Activated CD8-positive, alpha-beta memory T cell treated with anti-CD3 and anti-CD28 coated beads, Interleukin-2, amount 10 ng/mL, durations not matched to agents 7 days and 5 days (primary cell): ENCODE measurements at regions of chr1 and their contacts with region 1.

Region 1: GRCh38 chr1:32876341-32877210 is 5.9 kb upstream of the FNDC5 start:
- DNase-seq: peak; percentile 70
- ATAC-seq: peak; percentile 80
- H3K4me3 Mint-ChIP-seq: no peak overlapping the region
- H3K27ac Mint-ChIP-seq: no peak overlapping the region
- H3K4me1 Mint-ChIP-seq: peaks cover 2% of the 10 kb centered on the region
- H3K27me3 Mint-ChIP-seq: peaks cover 50% of the 10 kb centered on the region

Region 2: GRCh38 chr1:32892368-32893197 is 16.0 kb after region 1 on chr1:
- CTCF ChIA-PET with region 1: interaction called, 14 read pairs
- DNase-seq: peak; percentile 51
- ATAC-seq: peak; percentile 75
- H3K4me3 Mint-ChIP-seq: no peak overlapping the region
- H3K27ac Mint-ChIP-seq: no peak overlapping the region
- H3K4me1 Mint-ChIP-seq: no peaks in the 10 kb centered on the region
- H3K27me3 Mint-ChIP-seq: peaks cover 73% of the 10 kb centered on the region

Region 3: DNA sequence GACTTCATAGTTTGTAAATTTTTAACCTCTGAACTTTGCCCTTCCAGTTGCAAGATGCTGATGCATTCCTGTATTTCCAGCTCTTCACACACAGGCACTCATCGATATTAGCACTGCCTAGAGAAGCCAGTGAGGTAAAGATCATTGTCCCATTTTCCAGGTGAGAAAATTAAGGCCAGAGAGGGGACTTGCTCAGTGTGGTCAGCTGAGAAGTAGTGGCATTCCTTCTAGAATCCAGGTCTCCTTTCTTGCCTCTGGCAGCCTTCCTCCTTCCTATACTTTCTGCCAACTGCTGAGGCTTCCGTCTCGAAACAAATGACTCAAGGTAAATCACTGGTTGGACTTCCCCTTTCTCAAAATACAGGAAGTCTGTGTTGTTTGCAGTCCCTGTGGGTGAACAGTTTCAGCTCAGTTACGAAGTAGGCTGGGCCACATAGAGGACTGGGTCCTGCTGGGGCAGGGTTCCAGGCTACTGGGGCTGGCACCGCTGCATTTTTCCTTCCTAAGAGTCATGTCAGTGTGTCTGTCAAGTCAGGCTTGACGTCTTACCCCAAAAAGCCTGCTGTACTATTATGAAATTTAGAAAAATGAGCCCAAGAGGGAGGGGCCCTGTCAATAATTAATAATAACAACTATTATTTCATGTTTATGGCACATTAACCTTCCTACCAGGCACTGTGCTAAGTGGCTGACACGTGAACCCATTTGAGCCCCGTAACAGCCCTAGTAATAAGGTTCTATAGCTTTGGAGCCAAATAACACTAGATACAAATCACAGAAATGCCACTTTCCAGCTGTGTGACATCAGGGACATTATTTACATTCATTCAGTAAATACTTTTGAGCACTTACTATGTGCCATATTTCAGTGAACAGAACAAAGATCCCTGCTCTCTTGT is 104.7 kb after region 1 on chr1:
- CTCF ChIA-PET with region 1: no interaction called
- DNase-seq: peak; percentile 80
- ATAC-seq: peak; percentile 95
- H3K4me3 Mint-ChIP-seq: peak overlapping the region; percentile 60
- H3K27ac Mint-ChIP-seq: peak overlapping the region; percentile 87
- H3K4me1 Mint-ChIP-seq: peaks cover 65% of the 10 kb centered on the region
- H3K27me3 Mint-ChIP-seq: no peaks in the 10 kb centered on the region

Region 4: DNA sequence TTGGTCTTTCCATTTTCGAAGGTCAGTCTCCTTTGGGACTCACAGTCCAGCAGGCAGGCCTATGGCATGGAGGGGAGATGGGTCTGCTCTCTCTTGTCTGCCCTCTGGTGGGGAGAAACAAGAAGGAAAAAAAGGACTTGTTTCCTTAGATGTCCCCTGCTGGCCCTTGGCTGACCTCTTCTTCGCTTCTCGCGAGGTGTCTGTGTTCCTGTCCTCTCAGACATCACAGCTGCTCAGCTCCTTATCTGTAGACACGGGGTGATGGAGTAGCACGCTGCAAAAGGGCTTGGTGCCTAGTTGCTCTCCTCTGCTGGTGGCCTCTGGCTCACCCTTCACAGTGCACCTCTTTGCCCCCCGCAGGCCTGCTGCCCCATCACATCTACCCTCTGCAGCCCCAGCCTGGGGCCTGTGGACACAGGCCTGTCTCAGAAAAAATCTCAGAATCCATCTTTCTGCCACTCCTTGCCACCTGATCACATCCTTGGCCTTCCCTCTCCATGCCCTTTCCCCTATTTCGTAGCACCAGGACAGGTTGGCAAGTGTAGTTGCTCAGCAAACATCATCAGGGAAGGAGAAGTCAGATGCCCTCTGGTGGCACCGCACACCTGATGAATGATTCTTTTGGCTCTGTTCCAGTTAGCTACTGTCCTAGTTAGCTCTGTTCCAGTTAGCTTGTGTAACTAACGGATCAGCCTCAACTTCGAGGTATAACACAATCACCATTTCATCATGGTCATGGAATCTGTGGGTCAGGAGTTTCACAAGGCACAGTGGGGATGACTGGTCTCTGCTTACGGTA is 178.8 kb after region 1 on chr1:
- CTCF ChIA-PET with region 1: interaction called, 11 read pairs
- DNase-seq: peak; percentile 49
- ATAC-seq: peak; percentile 71
- H3K4me3 Mint-ChIP-seq: no peak overlapping the region
- H3K27ac Mint-ChIP-seq: no peak overlapping the region
- H3K4me1 Mint-ChIP-seq: peaks cover 5% of the 10 kb centered on the region
- H3K27me3 Mint-ChIP-seq: peaks cover 4% of the 10 kb centered on the region

Region 5: GRCh38 chr1:33086384-33086850 is 209.8 kb after region 1 on chr1:
- CTCF ChIA-PET with region 1: interaction called, 26 read pairs
- DNase-seq: peak; percentile 65
- ATAC-seq: no peak
- H3K4me3 Mint-ChIP-seq: no peak overlapping the region
- H3K27ac Mint-ChIP-seq: no peak overlapping the region
- H3K4me1 Mint-ChIP-seq: peaks cover 47% of the 10 kb centered on the region
- H3K27me3 Mint-ChIP-seq: peaks cover 9% of the 10 kb centered on the region

Region 6: DNA sequence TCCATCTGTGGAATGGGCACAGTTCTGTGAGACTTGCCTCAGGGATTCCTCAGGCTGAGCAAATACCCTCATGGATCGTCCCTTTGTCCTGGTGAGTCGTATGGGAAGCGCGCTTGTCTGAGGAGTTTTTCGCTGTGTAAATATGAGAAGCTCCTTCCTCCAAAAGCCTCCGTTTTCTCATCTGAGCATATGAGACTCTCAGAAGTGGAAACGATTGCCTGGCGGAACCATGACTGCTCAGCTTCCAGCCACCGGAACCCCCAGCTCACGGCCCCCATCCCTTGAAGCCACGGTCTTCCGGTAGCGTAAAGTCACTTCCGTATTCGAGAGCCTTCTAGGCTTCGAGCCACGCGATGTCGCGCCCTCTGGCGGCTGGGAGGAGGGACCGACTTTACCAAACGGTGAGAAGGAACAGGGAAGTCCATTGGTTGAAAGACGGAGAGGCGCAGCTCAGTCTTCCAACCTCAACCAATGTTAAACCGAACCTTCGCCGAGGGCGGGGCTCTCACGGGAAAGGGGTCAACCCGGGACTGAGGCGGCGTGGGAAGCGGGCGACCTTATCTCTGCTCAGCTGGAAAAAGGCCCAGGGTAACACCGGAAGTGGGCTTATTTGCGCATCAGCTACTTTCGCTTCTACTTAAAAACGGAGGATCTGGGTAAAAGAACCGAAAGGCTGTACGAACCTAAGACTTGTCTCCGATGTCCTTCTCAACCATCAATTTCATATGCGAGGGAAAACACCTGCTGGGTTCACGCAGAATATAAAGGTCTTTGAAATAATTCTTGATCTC is 250.6 kb after region 1 on chr1:
- CTCF ChIA-PET with region 1: no interaction called
- DNase-seq: peak; percentile 100
- ATAC-seq: peak; percentile 95
- H3K4me3 Mint-ChIP-seq: peak overlapping the region; percentile 97
- H3K27ac Mint-ChIP-seq: peak overlapping the region; percentile 98
- H3K4me1 Mint-ChIP-seq: peaks cover 51% of the 10 kb centered on the region
- H3K27me3 Mint-ChIP-seq: no peaks in the 10 kb centered on the region